ENCODE measurements at regions of chr12 and their contacts with region 1.

Region 1: DNA sequence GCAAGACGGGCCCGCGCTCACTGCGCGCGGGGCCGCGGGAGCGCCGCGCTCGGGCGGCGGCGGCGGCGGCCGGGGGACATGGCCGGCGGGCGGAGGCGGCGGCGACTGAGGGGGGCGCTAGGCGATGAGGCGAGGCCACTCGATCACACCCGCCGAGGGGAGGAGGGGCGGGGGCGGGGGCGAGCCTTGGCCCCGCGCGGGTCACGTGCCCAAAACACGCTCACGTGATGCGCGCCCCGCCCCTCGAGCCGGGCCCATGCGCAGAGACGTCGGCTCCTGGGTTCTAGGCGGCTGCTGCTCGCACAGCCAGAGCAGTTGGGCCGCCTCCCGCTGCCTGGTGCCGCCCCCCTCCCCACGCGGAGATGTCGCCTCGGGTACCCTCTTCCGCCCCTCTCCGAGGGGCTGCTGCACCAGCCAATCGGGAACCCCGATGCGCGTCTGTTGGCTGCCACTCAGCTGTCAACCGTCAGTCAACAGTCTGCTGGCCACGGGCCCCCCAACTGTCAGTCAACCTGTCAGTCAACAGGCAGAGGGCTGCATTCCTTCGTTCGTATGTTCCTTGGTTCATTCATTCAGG is at the start of gene SPPL3:
- DNase-seq: peak; percentile 87 to 94
- H3K4me3 ChIP-seq: peak within 1 kb of the TSS; percentile 96 to 100
- H3K27ac ChIP-seq: peak within 1 kb of the TSS; percentile 86 to 90
- H3K4me1 ChIP-seq: peaks cover 0 to 53% (median 31%) of the 10 kb centered on the region in 4 donors
- H3K27me3 ChIP-seq: no peaks in the 10 kb centered on the region
- CTCF ChIP-seq: no peak

Region 2: GRCh38 chr12:120725659-120726509 is 178.4 kb before region 1 on chr12 and contains the start of gene ACADS:
- intact Hi-C with region 1: loop called (anchors 10 kb)
- DNase-seq: peak; percentile 85 to 92
- H3K4me3 ChIP-seq: peak within 1 kb of the TSS; percentile 66 to 72
- H3K27ac ChIP-seq: peak within 1 kb of the TSS; percentile 82 to 86
- H3K4me1 ChIP-seq: peaks cover 0 to 17% (median 10%) of the 10 kb centered on the region in 4 donors
- H3K27me3 ChIP-seq: no peaks in the 10 kb centered on the region
- CTCF ChIP-seq: no peak

Region 3: DNA sequence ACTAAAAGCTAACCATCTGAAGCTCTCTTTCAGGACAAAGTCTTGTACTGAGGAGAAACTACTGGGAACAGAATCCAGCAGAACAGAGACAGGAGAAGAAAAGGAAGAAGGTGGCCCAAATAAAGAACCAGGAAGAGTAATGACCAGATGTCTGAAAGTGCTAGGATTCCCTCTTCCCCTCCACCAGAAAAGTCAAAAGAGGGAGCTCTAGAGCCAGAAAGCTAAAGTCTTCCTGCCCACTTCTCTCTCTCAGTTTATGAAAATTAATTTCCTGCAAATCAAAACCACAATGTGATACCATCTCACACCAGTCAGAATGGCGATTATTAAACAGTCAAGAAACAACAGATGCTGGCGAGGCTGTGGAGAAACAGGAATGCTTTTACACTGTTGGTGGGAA is 47.3 kb before region 1 on chr12:
- intact Hi-C with region 1: no loop called
- DNase-seq: no peak
- H3K4me3 ChIP-seq: no peak overlapping the region
- H3K27ac ChIP-seq: no peak overlapping the region
- H3K4me1 ChIP-seq: peaks cover 0 to 31% (median 4%) of the 10 kb centered on the region in 4 donors
- H3K27me3 ChIP-seq: no peaks in the 10 kb centered on the region
- CTCF ChIP-seq: no peak